Gastrocnemius medialis (tissue), 4 donors: ENCODE measurements at regions of chr1 and their contacts with region 1.

Region 1: DNA sequence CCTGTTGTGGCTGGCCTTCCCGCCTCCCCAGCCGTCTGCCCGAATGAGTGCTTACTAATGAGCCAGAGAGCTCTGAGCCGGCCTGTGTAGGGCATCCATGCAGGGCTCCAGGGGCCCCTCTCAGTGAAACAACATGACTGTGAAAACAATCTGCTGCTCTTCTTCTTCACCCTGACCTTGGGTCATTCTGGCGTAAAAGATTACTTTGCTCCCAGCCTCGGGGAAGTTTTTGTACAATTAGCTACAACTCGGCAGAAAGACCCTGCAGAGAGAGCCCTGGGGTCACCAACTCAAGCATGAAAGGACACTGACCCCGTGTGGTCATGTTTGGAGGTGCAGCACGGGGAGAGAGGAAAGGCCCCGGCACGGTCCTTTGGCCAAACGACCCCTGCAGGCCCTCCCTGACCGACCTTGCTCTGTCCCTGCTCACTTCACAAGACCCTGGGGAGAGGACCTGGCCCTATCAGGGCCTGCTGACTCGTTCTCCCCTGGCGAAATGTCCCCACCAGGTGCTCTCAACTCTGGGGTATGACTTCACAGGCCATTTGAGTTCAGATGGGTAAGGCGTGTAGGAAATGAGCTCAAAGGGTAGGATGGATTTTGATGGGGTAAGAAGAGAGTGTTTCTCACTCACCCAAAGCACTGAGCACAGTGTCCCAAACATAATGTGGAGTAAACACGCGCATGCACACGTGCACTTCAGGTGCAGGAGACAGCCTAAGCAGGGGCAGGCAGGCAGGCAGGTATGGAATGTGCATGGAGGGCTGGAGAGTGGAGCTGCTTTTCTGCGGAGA is 22.9 kb upstream of the FAM20B start:
- DNase-seq: peak in 1 of 2 donors; percentile 42
- ATAC-seq: peak; percentile 79 to 80
- H3K4me3 ChIP-seq: peak overlapping the region in 1 of 4 donors; percentile 42
- H3K27ac ChIP-seq: no peak overlapping the region
- H3K4me1 ChIP-seq: no peaks in the 10 kb centered on the region
- H3K27me3 ChIP-seq: no peaks in the 10 kb centered on the region
- CTCF ChIP-seq: peak; percentile 91 to 96 (median 95)
- POLR2A ChIP-seq: no peak

Region 2: GRCh38 chr1:178344513-178345082 is 658.2 kb before region 1 on chr1:
- in situ Hi-C with region 1: loop called in 1 of 4 experiments (anchors 25 kb)
- intact Hi-C with region 1: no loop called
- DNase-seq: no peak
- ATAC-seq: peak; percentile 74 to 76
- H3K4me3 ChIP-seq: peak overlapping the region in 2 of 4 donors; percentile 16 to 19
- H3K27ac ChIP-seq: peak overlapping the region; percentile 76 to 84 (median 82)
- H3K4me1 ChIP-seq: peaks cover 56 to 60% of the 10 kb centered on the region in 2 donors
- H3K27me3 ChIP-seq: no peaks in the 10 kb centered on the region
- CTCF ChIP-seq: peak; percentile 45 to 82 (median 57)
- POLR2A ChIP-seq: no peak

Region 3: DNA sequence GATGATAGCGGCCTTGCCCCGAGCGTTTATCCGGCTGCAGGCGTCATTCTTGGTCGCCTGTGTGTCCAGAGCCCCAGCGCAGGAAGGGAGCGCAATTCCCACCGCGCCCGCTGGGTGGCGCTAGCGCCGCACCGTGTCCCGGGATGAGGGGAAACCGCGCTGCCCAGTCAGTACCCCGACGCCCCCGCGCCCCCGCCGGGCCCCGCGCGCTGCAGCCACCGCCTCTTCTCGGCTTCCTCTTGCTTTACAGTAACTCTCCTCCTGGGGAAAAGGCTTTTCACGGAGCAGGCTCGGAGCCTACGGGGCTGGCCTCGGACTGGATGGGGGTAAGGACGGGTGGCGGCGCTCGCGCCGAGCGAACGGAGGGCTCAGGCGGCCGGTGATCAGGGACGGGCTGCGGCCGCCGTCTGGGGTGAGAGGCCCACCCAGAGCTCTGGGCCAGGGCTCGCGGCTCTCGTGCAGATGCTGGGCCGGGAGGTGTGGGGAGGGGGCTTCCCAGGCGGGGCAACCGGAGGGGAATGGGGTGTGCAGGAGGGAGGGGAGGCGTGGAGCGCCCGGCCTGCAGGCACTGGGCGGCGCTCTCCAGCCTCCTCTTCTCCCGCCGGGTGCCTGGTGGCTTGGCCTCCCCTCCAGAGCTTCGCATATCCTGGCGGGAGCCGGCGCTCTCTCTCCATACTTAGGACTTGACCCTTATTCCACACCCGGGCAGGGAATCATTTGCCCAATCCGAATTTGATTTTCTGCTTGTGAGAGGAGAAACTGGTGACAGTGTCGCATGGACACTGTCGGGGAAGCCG is 460.0 kb before region 1 on chr1:
- in situ Hi-C with region 1: loop called in 3 of 4 experiments (anchors 10 to 25 kb)
- intact Hi-C with region 1: no loop called
- DNase-seq: peak; percentile 53 to 73
- ATAC-seq: peak; percentile 76 to 89
- H3K4me3 ChIP-seq: peak overlapping the region; percentile 60 to 70 (median 64)
- H3K27ac ChIP-seq: peak overlapping the region; percentile 34 to 60 (median 54)
- H3K4me1 ChIP-seq: peaks cover 18 to 31% of the 10 kb centered on the region in 2 donors
- H3K27me3 ChIP-seq: no peaks in the 10 kb centered on the region
- CTCF ChIP-seq: peak; percentile 87 to 99 (median 96)
- POLR2A ChIP-seq: no peak

Region 4: DNA sequence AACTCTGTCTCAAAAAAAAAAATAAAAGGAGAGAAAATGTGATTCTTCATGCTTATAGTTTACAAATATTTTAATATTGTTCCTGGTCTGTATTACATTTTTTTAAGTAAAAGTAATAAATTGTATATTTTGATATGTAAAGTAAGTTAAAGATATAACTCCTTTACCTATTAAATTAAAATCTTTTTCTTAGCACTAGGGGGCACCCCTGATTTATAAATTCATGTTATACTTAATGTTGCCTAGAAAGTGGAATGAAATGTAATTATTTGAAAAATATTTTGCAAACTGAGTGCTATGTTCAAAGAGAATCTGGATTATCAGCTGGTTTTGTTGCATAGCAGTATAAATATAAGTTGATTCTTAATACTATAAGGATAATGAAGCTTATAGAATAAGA is 228.5 kb before region 1 on chr1:
- in situ Hi-C with region 1: loop called (anchors 10 kb)
- intact Hi-C with region 1: loop called (anchors 1 kb)
- DNase-seq: no peak
- ATAC-seq: no peak
- H3K4me3 ChIP-seq: no peak overlapping the region
- H3K27ac ChIP-seq: no peak overlapping the region
- H3K4me1 ChIP-seq: no peaks in the 10 kb centered on the region
- H3K27me3 ChIP-seq: no peaks in the 10 kb centered on the region
- CTCF ChIP-seq: peak in 4 of 5 experiments; percentile 19 to 57 (median 34)
- POLR2A ChIP-seq: no peak

Region 5: DNA sequence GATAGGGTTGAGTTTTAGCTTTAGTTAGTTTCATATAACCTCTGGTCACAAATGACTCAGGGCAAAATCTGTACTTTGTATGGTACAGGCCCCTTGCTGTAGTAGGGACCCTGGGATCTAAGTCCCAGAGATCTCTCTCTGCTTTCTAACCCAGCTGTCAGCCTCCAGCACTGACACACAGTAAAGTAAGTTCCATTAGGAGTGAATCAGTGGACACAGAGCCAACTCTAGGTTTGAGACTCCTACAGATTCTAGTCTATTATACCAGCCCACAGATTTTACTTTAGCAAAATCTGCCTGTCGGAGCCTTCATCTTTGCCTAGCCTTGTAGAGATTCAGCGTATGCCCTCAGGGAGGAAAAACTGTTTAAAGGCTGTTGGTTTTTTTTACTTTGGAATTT is 184.3 kb before region 1 on chr1:
- in situ Hi-C with region 1: loop called in 2 of 4 experiments (anchors 5 kb)
- intact Hi-C with region 1: loop called (anchors 2 kb)
- DNase-seq: no peak
- ATAC-seq: no peak
- H3K4me3 ChIP-seq: no peak overlapping the region
- H3K27ac ChIP-seq: no peak overlapping the region
- H3K4me1 ChIP-seq: no peaks in the 10 kb centered on the region
- H3K27me3 ChIP-seq: no peaks in the 10 kb centered on the region
- CTCF ChIP-seq: no peak
- POLR2A ChIP-seq: no peak